K562 (cell line): ENCODE measurements at regions of chr5 and their contacts with region 1.

Region 1: GRCh38 chr5:148957591-148958202 is 105.2 kb downstream of the SH3TC2 start:
- DNase-seq: peak; percentile 57 to 74 (median 66)
- ATAC-seq: peak; percentile 89
- H3K4me3 ChIP-seq: no peak overlapping the region
- H3K27ac ChIP-seq: no peak overlapping the region
- H3K4me1 ChIP-seq: no peaks in the 10 kb centered on the region
- H3K27me3 ChIP-seq: no peaks in the 10 kb centered on the region; a peak in 2 of 5 replicates
- CTCF ChIP-seq: peak; percentile 76 to 88 (median 84)
- EP300 ChIP-seq: no peak
- POLR2A ChIP-seq: no peak
- RAD21 ChIP-seq: peak; percentile 68 to 88

Region 2: GRCh38 chr5:148708854-148709253 is 248.8 kb before region 1 on chr5:
- CTCF ChIA-PET with region 1: no interaction called
- POLR2A ChIA-PET with region 1: no interaction called
- in situ Hi-C with region 1: no loop called
- intact Hi-C with region 1: no loop called
- DNase-seq: no peak
- ATAC-seq: no peak
- H3K4me3 ChIP-seq: no peak overlapping the region
- H3K27ac ChIP-seq: no peak overlapping the region
- H3K4me1 ChIP-seq: no peaks in the 10 kb centered on the region; a peak in 1 of 5 replicates
- H3K27me3 ChIP-seq: no peaks in the 10 kb centered on the region
- CTCF ChIP-seq: no peak
- EP300 ChIP-seq: no peak
- POLR2A ChIP-seq: no peak
- RAD21 ChIP-seq: no peak

Region 3: DNA sequence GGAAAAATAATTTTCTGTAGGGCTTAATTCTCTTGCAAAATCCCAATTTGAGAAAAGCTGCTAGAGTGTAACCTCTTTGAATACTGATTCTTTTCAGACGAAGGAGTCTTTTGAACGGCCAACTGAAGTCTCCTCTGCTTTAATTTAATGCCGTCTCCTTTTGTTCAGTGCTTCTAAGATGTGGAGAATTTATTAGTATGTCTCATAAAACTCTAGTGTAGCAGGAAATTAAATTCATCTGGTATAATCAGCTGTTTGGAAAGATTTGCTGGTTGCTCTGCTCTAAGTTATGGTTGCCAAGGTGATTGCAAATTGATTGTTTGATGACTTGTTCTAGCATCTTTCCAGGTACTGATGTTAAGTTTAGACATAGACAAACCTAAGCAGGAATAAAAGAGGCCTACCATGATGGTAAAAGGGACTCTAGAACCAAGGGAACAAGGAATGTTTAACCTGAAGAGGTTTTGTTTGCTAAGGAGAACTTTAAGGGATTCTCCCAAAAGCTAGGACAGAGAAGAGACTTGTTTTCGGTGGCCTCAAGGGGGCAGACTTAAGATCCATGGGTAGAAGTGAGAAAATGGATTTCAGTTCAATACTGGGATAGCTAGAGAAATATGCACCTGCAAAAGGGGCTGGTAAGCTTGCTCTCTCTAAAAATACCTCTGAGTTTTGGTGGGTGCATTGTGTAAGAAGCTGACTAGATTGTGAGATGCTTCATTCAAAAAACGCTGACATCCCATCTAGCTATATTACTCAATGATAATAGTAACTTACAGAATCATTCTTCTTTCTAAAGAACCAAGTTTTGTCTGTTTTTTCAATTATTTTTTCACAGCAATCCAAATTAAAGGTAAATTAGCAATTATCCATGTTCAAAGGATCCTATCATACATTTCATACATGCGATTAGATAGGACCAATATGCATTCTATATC is 137.0 kb before region 1 on chr5:
- CTCF ChIA-PET with region 1: no interaction called
- POLR2A ChIA-PET with region 1: no interaction called
- in situ Hi-C with region 1: no loop called
- intact Hi-C with region 1: loop called (anchors 5 kb)
- DNase-seq: peak in 2 of 4 experiments; percentile 17 to 33
- ATAC-seq: peak; percentile 71; the same call in 2 of the 3 replicates
- H3K4me3 ChIP-seq: no peak overlapping the region
- H3K27ac ChIP-seq: no peak overlapping the region
- H3K4me1 ChIP-seq: peaks cover under 1 to 3% of the 10 kb centered on the region in 2 experiments; a peak in 1 of 5 replicates
- H3K27me3 ChIP-seq: peaks cover 2 to 7% of the 10 kb centered on the region in 2 experiments; a peak in 4 of 5 replicates
- CTCF ChIP-seq: peak; percentile 24 to 66 (median 55); a peak in 5 of 6 replicates
- EP300 ChIP-seq: no peak
- POLR2A ChIP-seq: no peak
- RAD21 ChIP-seq: peak; percentile 38 to 54; a peak in 3 of 4 replicates

Region 4: GRCh38 chr5:148912714-148913398 is 44.8 kb before region 1 on chr5:
- CTCF ChIA-PET with region 1: no interaction called
- POLR2A ChIA-PET with region 1: no interaction called
- in situ Hi-C with region 1: no loop called
- intact Hi-C with region 1: loop called (anchors 1 kb)
- DNase-seq: no peak
- ATAC-seq: peak; percentile 50; the same call in 2 of the 3 replicates
- H3K4me3 ChIP-seq: no peak overlapping the region
- H3K27ac ChIP-seq: no peak overlapping the region
- H3K4me1 ChIP-seq: peaks cover 0 to 6% of the 10 kb centered on the region in 2 experiments; a peak in 2 of 5 replicates
- H3K27me3 ChIP-seq: peaks cover 8 to 11% of the 10 kb centered on the region in 2 experiments; a peak in 1 of 5 replicates
- CTCF ChIP-seq: peak in 1 of 3 experiments; percentile 27; a peak in 1 of 6 replicates
- EP300 ChIP-seq: no peak
- POLR2A ChIP-seq: no peak
- RAD21 ChIP-seq: peak; percentile 6 to 38; a peak in 2 of 4 replicates